Right ventricle myocardium inferior (tissue), 1 donor: ENCODE measurements at regions of chrX and their contacts with region 1.

Region 1: GRCh38 chrX:155056877-155057792 is 13.8 kb downstream of the CMC4 start:
- DNase-seq: peak; percentile 71
- ATAC-seq: peak; percentile 81

Region 2: GRCh38 chrX:154918060-154918483 is 139.1 kb before region 1 on chrX:
- intact Hi-C with region 1: no loop called
- DNase-seq: no peak
- ATAC-seq: peak; percentile 54

Region 3: DNA sequence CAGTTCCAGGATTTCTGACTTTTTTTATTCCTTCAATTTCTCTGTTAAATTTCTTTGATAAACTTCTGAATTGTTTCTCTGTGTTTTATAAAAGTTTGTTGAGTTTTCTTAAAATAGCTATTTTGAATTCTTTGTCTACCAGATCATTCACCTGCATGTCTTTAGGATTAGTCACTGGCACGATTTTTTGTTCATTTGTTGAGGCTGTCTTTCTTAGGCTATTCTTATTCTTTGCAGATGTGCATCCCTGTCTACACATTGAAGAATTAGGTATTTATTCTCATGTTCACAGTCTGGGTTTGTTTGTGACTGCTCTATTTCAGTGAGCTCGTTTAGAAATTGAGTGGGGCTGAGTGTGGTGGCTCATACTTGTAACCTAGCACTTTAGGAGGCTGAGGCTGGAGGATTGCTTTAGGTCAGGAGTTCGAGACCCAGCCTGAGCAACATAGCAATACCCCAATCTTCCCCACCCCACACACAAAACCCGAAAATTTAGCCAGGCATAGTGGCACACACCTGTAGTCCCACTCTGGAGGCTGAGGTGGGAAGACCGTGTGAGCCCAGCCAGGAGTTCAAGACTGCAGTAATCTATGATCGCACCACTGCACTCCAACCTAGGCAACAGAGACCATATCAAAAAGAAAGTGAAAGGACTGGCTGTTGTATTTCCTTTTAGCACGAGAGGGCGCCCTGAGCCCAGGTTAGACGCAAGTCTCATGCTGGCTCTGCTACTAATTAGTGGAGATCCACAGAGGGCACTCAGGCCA is 76.6 kb before region 1 on chrX:
- intact Hi-C with region 1: loop called (anchors 2 kb)
- DNase-seq: no peak
- ATAC-seq: peak; percentile 83